GM18951 (cell line): ENCODE measurements at regions of chr14 and their contacts with region 1.

Region 1: GRCh38 chr14:70622111-70622712 is 19.5 kb upstream of the TTC9 start:
- POLR2A ChIP-seq: no peak

Region 2: DNA sequence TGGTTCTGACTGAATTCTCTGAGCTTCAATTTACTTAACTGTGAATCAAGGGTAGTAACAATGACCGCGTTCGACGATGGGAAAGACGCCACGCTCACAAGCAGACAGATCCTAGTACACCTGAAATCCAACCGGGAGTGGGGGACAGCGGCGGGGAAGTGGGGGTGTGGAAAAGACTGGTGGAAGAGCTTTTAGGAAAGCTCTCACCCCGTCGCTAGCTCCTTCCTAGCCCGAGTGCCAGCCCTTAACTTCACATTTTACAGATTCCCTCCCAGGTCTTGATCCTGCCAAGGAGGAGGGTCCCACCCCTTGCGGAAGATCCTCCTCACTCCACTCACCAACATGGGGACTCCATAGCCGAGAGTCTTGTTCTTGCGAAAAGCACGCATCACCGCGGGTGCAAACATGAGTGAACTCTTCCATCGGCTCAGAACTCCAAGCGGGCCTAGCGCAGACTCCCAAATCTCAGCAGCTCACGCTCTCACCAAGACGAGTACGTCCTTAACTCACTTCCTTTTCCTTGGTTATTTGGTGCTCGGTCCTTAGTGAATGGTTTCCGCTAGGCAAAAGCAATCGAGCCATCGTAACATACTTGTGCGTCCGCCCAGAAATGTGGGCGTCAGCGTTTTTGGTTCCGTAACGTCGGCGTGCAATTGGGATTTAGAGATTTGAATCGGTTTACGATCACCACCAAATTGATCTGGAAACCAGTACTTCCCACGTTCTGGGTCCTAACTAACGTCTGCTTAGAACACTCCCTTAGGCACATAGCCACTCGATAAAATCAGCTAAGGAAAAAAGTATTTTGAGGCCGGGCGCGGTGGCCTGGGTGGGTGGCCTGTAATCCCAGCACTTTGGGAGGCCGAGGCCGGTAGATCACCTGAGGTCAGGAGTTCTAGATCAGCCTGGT is 262.8 kb before region 1 on chr14 and contains the start of gene COX16:
- in situ Hi-C with region 1: no loop called
- POLR2A ChIP-seq: peak; percentile 83

Region 3: GRCh38 chr14:70498191-70498590 is 124.0 kb before region 1 on chr14:
- in situ Hi-C with region 1: no loop called
- POLR2A ChIP-seq: no peak

Region 4: GRCh38 chr14:70714055-70714621 is 91.9 kb after region 1 on chr14:
- in situ Hi-C with region 1: loop called (anchors 10 kb)
- POLR2A ChIP-seq: no peak

Region 5: DNA sequence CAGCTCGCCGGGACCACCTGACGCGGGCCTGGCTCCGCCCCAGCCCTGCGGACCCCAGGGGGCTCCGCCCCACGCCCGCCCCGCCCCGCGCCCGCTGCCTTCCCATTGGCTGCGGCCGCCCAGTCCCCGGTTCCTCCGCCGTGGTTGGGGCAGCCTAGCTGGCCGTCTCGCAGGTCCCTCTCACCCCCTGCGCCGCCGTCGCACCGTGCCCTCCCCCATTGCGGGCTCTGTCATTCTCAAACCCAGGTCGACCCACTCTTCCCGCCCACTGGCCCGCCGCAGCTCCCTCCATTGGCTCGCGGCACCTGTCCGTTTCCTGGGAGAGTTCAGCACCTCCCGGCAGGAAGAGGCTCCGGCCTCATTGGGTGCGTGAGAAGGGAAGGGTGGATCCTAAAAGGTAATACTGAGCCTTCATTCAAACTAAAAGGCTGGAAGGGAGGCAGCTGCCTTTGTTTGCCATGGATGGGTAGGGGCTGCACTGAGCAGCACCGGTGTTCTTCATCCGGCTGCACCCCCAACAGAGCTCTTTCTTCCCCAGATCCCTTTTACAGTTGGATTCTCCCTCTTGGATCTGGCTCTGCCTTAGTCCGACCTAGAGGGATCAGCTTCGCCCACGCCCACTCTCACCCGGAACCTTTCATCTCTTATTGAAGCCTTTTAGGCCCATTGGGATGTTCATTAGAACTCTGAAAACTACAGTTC is 187.5 kb after region 1 on chr14:
- in situ Hi-C with region 1: loop called (anchors 10 kb)
- POLR2A ChIP-seq: peak; percentile 48